ENCODE measurements at regions of chr10 and their contacts with region 1.

Region 1: DNA sequence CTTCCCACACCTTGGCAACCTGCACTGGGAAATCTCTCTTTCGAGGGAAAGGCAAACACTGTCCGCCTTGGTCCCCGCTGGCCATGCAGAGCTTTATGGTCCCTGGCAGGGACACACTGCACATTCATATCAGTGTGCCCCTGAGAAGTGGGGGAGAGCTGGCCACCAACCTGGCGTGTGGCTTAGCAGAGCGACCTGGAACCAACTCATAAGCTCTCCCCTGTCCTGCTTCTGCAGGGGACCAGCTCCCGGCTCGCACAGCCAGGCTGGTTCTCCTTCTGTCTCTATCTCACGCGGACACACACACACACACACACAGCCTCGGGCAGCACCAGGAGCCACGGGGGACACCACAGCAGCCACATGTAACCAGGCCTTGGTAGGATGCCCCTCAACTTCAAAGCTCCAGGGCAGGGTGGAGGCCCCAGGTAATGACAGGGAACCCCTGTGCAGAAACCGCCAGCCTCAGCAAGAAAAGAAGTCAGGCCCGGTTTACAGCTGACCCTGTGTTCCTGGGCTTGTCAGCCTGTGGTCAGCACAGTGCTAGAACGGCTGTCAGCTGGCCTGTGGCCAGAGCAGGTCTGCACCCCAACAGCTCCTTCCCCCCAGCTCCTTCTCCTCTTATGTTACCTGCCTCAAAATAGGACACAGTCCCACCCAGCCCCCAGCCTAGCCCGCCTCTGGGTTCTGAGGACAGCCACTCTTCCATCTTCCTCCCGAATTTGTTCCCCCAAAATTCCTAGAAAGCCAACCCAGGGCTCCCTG is 69.3 kb downstream of the OAT start:
- DNase-seq: no peak
- ATAC-seq: no peak
- H3K4me3 ChIP-seq: no peak overlapping the region
- H3K27ac ChIP-seq: no peak overlapping the region
- H3K4me1 ChIP-seq: 0 out of 2 replicates have a peak, but pooled peaks cover 4% of the 10 kb centered on the region
- H3K27me3 ChIP-seq: no peaks in the 10 kb centered on the region
- CTCF ChIP-seq: no peak

Region 2: GRCh38 chr10:124066781-124067714 is 282.4 kb before region 1 on chr10:
- CTCF ChIA-PET with region 1: no interaction called
- POLR2A ChIA-PET with region 1: no interaction called
- in situ Hi-C with region 1: no loop called
- intact Hi-C with region 1: no loop called
- DNase-seq: no peak
- ATAC-seq: no peak
- H3K4me3 ChIP-seq: no peak overlapping the region
- H3K27ac ChIP-seq: no peak overlapping the region
- H3K4me1 ChIP-seq: peaks cover 9% of the 10 kb centered on the region
- H3K27me3 ChIP-seq: no peaks in the 10 kb centered on the region
- CTCF ChIP-seq: no peak

Region 3: GRCh38 chr10:124303662-124304418 is 45.6 kb before region 1 on chr10:
- CTCF ChIA-PET with region 1: no interaction called
- POLR2A ChIA-PET with region 1: interaction called, 12 read pairs
- in situ Hi-C with region 1: no loop called
- intact Hi-C with region 1: no loop called
- DNase-seq: no peak
- ATAC-seq: no peak
- H3K4me3 ChIP-seq: no peak overlapping the region
- H3K27ac ChIP-seq: no peak overlapping the region
- H3K4me1 ChIP-seq: no peaks in the 10 kb centered on the region
- H3K27me3 ChIP-seq: no peaks in the 10 kb centered on the region
- CTCF ChIP-seq: no peak